Calu3 (cell line): ENCODE measurements at regions of chr1 and their contacts with region 1.

Region 1: DNA sequence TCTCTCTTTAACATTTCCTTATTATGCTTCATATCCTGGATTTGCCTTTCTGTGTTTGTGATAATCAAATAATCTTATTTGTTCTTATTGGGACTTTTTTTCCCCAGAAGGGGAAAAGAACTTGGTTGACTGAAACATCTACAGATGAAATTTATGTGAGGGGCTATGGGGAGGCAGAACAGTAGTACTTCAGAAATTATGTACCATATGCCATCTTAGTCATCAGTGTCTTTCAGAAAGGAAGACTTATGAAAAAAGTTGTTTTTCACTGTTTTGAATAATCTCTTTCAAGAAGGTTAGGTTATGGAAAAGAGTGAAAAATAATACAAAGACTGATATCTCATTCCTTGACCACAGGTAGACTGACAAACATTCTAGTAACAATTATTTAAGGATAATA is 30.2 kb upstream of the TRAF5 start:
- DNase-seq: no peak
- H3K4me3 Mint-ChIP-seq: no peak overlapping the region
- H3K27ac Mint-ChIP-seq: no peak overlapping the region
- H3K4me1 Mint-ChIP-seq: no peaks in the 10 kb centered on the region
- H3K27me3 Mint-ChIP-seq: no peaks in the 10 kb centered on the region
- CTCF ChIP-seq: no peak

Region 2: DNA sequence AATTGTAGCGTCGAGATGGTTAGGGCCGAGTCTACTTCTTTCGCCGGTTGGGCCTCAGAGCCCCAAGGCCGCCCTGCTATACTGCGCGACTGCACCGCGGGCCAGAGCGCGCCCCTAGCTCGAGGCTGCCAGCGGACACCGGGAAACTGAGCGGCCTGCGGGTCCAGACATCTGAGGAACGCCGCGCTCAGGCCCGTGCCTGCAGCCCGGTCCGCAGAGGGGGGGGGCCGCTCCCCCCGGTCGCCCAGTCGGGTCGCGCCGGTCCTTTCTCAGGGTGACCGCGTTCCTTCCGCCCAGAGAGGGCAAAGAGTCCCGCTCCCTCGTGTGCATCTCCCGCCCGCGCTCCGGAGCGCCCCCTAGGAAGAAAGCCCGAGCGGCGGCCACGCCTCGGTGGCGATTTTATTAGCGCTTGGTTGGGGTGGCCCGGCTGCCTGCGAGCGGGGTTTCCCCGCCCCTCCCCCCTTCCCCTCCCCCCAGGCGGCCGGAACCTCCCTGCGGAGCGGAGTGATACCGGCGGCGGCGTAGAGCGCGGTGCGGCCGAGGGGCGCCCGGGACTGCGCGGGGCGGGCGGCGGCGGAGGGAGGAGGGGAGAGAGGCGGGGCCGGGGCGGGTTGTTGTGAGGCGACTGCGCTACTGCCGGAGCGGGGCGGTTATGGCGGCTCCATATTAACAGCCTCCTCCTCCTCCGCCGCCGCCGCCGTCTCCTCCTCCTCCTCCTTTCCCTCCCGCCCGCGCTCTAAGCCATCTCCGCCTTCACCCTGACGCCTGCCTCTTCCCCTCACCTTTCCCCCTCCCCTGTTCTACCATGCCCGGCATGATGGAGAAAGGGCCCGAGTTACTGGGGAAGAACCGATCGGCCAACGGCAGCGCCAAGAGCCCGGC is 37.4 kb before region 1 on chr1 and contains the start of gene RCOR3:
- CTCF ChIA-PET with region 1: no interaction called
- intact Hi-C with region 1: loop called (anchors 5 kb)
- DNase-seq: peak; percentile 96
- H3K4me3 Mint-ChIP-seq: peak within 1 kb of the TSS; percentile 70
- H3K27ac Mint-ChIP-seq: peak within 1 kb of the TSS; percentile 62
- H3K4me1 Mint-ChIP-seq: peaks cover 18% of the 10 kb centered on the region
- H3K27me3 Mint-ChIP-seq: no peaks in the 10 kb centered on the region
- CTCF ChIP-seq: peak; percentile 80
- total RNA-seq, gene RCOR3: 48.0 and 54.1 TPM in 2 replicates